HEK293 (cell line): ENCODE measurements at regions of chr2 and their contacts with region 1.

Region 1: DNA sequence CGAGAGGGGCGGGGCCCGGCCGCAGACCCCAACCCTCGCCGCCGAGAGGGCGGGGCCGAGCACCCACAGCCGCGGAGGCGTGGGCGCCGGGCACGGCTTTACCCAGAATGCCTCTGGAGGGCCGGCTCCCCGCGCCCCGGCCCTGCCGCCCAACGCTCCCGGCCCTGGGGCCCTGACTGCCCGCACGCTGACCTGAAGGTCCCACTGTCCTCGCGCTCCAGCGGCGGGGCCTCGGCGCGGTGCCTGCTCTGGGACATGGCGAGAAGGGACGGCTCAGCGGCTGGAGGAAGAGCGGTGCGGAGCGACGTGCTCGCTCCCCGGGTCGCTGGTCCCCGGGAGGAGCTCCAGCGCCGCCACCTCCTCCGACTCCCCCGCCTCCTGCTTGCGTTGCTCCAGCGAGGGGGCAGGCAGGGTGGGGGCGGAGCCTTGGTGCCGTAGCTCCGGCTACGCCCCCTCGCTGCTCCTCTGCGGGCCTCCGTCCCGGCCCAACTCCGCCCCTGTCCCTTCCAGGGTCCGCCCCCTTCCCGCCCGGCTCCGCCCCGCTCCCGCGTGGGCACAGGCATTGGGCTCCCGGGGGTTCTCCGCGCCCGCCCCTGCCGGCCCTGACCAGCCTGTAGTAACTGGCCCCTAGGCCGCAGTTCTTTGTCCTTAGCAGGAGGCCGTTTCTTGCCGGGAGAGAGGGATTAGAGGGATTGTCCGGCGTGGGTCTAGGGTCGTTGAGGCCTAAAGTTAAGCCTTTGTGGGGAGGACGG is at the starts of genes PJVK and PRKRA:
- H3K4me3 ChIP-seq: peak within 1 kb of the TSS; percentile 92
- H3K27ac ChIP-seq: peak within 1 kb of the TSS; percentile 83
- H3K4me1 ChIP-seq: 0 out of 2 replicates have a peak, but pooled peaks cover 9% of the 10 kb centered on the region
- CTCF ChIP-seq: peak; percentile 78

Region 2: GRCh38 chr2:178480227-178481181 is 29.6 kb after region 1 on chr2 and contains the start of gene PLEKHA3:
- CTCF ChIA-PET with region 1: no interaction called
- POLR2A ChIA-PET with region 1: interaction called, 12 read pairs
- H3K4me3 ChIP-seq: peak within 1 kb of the TSS; percentile 87
- H3K27ac ChIP-seq: peak within 1 kb of the TSS; percentile 60
- H3K4me1 ChIP-seq: peaks cover 13% of the 10 kb centered on the region
- CTCF ChIP-seq: no peak

Region 3: GRCh38 chr2:178522950-178523595 is 72.1 kb after region 1 on chr2:
- CTCF ChIA-PET with region 1: no interaction called
- POLR2A ChIA-PET with region 1: interaction called, 10 read pairs
- H3K4me3 ChIP-seq: peak overlapping the region; percentile 85
- H3K27ac ChIP-seq: 0 out of 2 replicates have a peak overlapping the region, but pooled peaks have one; percentile 2
- H3K4me1 ChIP-seq: no peaks in the 10 kb centered on the region
- CTCF ChIP-seq: peak; percentile 94

Region 4: GRCh38 chr2:178579006-178579405 is 128.1 kb after region 1 on chr2:
- CTCF ChIA-PET with region 1: no interaction called
- POLR2A ChIA-PET with region 1: no interaction called
- H3K4me3 ChIP-seq: no peak overlapping the region
- H3K27ac ChIP-seq: no peak overlapping the region
- H3K4me1 ChIP-seq: no peaks in the 10 kb centered on the region
- CTCF ChIP-seq: no peak